IMR-90 (cell line): ENCODE measurements at regions of chr17 and their contacts with region 1.

Region 1: GRCh38 chr17:82153745-82154375 is 55.8 kb upstream of the FASN start:
- DNase-seq: peak; percentile 55
- ATAC-seq: peak; percentile 100
- H3K4me3 ChIP-seq: no peak overlapping the region
- H3K27ac ChIP-seq: no peak overlapping the region
- H3K4me1 ChIP-seq: no peaks in the 10 kb centered on the region
- H3K27me3 ChIP-seq: no peaks in the 10 kb centered on the region
- CTCF ChIP-seq: peak; percentile 90
- POLR2A ChIP-seq: no peak
- RAD21 ChIP-seq: peak; percentile 93

Region 2: GRCh38 chr17:81959362-81960129 is 194.3 kb before region 1 on chr17:
- CTCF ChIA-PET with region 1: no interaction called
- POLR2A ChIA-PET with region 1: no interaction called
- dilution Hi-C with region 1: no loop called
- in situ Hi-C with region 1: no loop called
- intact Hi-C with region 1: loop called (anchors 10 kb)
- DNase-seq: peak; percentile 24
- ATAC-seq: peak; percentile 91
- H3K4me3 ChIP-seq: peak overlapping the region; percentile 21
- H3K27ac ChIP-seq: no peak overlapping the region
- H3K4me1 ChIP-seq: no peaks in the 10 kb centered on the region
- H3K27me3 ChIP-seq: peaks cover 50% of the 10 kb centered on the region
- CTCF ChIP-seq: peak; percentile 99
- POLR2A ChIP-seq: no peak
- RAD21 ChIP-seq: peak; percentile 90

Region 3: GRCh38 chr17:82030470-82031302 is 123.2 kb before region 1 on chr17:
- CTCF ChIA-PET with region 1: interaction called, 4 read pairs
- POLR2A ChIA-PET with region 1: no interaction called
- dilution Hi-C with region 1: no loop called
- in situ Hi-C with region 1: loop called (anchors 5 kb)
- intact Hi-C with region 1: loop called (anchors 1 kb)
- DNase-seq: peak; percentile 79
- ATAC-seq: peak; percentile 89
- H3K4me3 ChIP-seq: peak overlapping the region; percentile 47
- H3K27ac ChIP-seq: no peak overlapping the region
- H3K4me1 ChIP-seq: peaks cover 4% of the 10 kb centered on the region; the same call in 1 of the 2 replicates
- H3K27me3 ChIP-seq: no peaks in the 10 kb centered on the region
- CTCF ChIP-seq: peak; percentile 93
- POLR2A ChIP-seq: no peak
- RAD21 ChIP-seq: peak; percentile 94

Region 4: DNA sequence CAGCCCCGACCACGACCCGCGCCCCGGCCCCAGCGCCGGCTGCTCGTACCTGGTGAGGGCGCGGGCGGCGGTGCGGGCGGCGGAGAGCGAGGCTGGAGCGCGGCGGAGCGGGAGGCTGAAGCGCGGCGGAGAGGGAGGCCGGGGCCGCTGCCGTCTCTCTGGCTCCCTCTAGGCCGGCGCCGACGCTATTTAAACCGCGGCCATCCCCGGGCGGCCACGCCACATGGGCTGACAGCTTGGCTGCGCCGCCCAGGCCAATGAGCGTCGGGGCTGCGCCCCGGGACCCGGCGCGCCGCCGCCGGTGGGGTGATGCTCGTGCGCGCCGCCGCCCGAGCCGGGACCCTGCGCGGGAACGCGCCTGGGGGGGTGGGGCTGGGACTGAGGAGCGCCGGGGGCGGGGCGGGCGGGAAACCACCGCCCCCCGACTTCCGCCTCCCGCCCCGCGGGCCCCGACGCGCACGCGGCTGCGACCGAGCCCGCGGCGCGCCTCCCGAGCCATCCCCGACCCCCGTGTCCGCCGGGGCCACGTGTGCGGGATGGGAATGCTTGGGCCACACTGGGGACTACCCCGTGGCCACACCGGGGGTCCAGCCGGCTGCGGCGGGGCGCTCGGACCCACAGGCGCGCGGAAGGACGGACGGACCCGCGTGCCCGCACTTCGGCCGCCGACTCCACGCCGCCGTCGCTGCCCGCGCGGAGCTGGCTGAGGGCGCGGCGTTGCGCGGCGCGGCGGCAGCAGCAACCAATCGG is 55.6 kb before region 1 on chr17 and contains the start of gene FASN:
- CTCF ChIA-PET with region 1: no interaction called
- POLR2A ChIA-PET with region 1: no interaction called
- dilution Hi-C with region 1: no loop called
- in situ Hi-C with region 1: no loop called
- intact Hi-C with region 1: loop called (anchors 1 kb)
- DNase-seq: peak; percentile 93
- ATAC-seq: peak; percentile 85
- H3K4me3 ChIP-seq: peak within 1 kb of the TSS; percentile 72
- H3K27ac ChIP-seq: peak within 1 kb of the TSS; percentile 94
- H3K4me1 ChIP-seq: peaks cover 13% of the 10 kb centered on the region
- H3K27me3 ChIP-seq: no peaks in the 10 kb centered on the region
- CTCF ChIP-seq: peak; percentile 66
- POLR2A ChIP-seq: peak; percentile 97
- RAD21 ChIP-seq: peak; percentile 15; the same call in 1 of the 2 replicates
- total RNA-seq, gene FASN: 12.4 and 15.3 TPM in 2 replicates

Region 5: GRCh38 chr17:82257473-82257872 is 103.6 kb after region 1 on chr17:
- CTCF ChIA-PET with region 1: no interaction called
- POLR2A ChIA-PET with region 1: no interaction called
- dilution Hi-C with region 1: no loop called
- in situ Hi-C with region 1: no loop called
- intact Hi-C with region 1: no loop called
- DNase-seq: no peak
- ATAC-seq: peak; percentile 63; the same call in 1 of the 2 replicates
- H3K4me3 ChIP-seq: no peak overlapping the region
- H3K27ac ChIP-seq: no peak overlapping the region
- H3K4me1 ChIP-seq: no peaks in the 10 kb centered on the region
- H3K27me3 ChIP-seq: no peaks in the 10 kb centered on the region
- CTCF ChIP-seq: no peak
- POLR2A ChIP-seq: no peak
- RAD21 ChIP-seq: no peak